PC-9 (cell line): ENCODE measurements at regions of chr5 and their contacts with region 1.

Region 1: DNA sequence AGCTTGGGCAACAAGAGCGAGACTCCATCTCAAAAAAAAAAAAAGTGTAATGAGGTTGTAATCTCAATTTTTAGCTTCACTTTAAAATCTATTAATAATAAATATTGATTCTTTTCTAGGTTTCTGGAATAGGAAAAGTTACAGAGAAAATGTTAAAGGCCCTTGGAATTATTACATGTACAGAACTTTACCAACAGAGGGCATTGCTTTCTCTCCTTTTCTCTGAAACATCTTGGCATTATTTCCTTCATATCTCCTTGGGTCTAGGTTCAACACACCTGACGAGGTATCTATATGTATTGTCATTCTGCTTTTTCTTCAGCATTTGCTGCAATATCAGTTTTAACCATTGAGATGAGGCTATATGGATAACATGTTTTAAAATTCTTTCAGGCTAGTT is 26.6 kb upstream of the ANKDD1B start:
- DNase-seq: no peak
- H3K4me3 ChIP-seq: no peak overlapping the region
- H3K27ac ChIP-seq: no peak overlapping the region
- H3K4me1 ChIP-seq: no peaks in the 10 kb centered on the region
- H3K27me3 ChIP-seq: no peaks in the 10 kb centered on the region
- CTCF ChIP-seq: peak; percentile 60

Region 2: GRCh38 chr5:75681125-75681830 is 96.6 kb after region 1 on chr5:
- CTCF ChIA-PET with region 1: no interaction called
- POLR2A ChIA-PET with region 1: no interaction called
- intact Hi-C with region 1: loop called (anchors 5 kb)
- DNase-seq: peak in 1 of 2 experiments; percentile 49
- H3K4me3 ChIP-seq: no peak overlapping the region
- H3K27ac ChIP-seq: no peak overlapping the region
- H3K4me1 ChIP-seq: peaks cover 5% of the 10 kb centered on the region; the same call in 1 of the 2 replicates
- H3K27me3 ChIP-seq: no peaks in the 10 kb centered on the region
- CTCF ChIP-seq: peak; percentile 85